ENCODE measurements at regions of chr1 and their contacts with region 1.

Region 1: GRCh38 chr1:33367485-33368405 is 46.8 kb upstream of the A3GALT2 start:
- DNase-seq: peak; percentile 87 to 95 (median 94)
- ATAC-seq: peak; percentile 72
- H3K4me3 ChIP-seq: no peak overlapping the region
- H3K27ac ChIP-seq: peak overlapping the region; percentile 10
- H3K4me1 ChIP-seq: peaks cover 25% of the 10 kb centered on the region
- H3K27me3 ChIP-seq: no peaks in the 10 kb centered on the region

Region 2: DNA sequence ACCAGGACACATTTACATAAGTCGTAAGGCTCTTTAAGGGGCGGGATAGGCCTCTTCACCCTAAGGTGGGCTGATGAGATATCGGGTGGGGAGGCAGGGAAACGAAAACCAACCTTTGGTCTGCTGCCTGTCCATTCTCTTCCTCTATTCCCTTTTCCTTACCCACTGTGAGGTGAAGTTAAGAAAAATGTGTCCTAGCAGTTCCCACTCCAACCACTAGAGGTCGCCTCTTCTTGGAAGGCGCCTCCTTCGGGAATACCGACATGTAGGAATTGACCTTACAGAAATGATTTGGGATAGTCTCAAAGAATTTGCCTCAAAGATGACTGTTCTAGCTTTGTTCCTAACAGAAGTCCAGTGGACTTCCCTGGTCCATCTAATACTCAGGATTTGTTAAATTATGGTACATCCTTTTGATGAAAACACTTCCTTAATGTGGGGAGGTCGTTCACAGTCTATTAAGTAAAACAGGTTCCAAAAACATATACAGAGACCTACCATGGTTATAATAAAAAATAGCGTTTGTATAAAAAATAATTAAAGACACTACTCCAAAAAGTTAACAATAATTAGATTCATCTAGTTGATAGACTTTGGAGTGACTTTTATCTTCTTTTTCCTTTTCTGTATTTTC is 272.7 kb before region 1 on chr1:
- intact Hi-C with region 1: loop called in 1 of 4 experiments (anchors 10 kb)
- DNase-seq: peak in 1 of 3 donors; percentile 37
- ATAC-seq: peak in 1 of 2 donors; percentile 43
- H3K4me3 ChIP-seq: no peak overlapping the region
- H3K27ac ChIP-seq: no peak overlapping the region
- H3K4me1 ChIP-seq: peaks cover 4% of the 10 kb centered on the region
- H3K27me3 ChIP-seq: no peaks in the 10 kb centered on the region

Region 3: GRCh38 chr1:33219881-33220661 is 147.7 kb before region 1 on chr1:
- intact Hi-C with region 1: loop called in 2 of 4 experiments (anchors 5 to 10 kb)
- DNase-seq: peak in 1 of 3 donors; percentile 30
- ATAC-seq: peak in 1 of 2 donors; percentile 27
- H3K4me3 ChIP-seq: no peak overlapping the region
- H3K27ac ChIP-seq: no peak overlapping the region
- H3K4me1 ChIP-seq: no peaks in the 10 kb centered on the region
- H3K27me3 ChIP-seq: no peaks in the 10 kb centered on the region

Region 4: GRCh38 chr1:33228935-33229487 is 138.7 kb before region 1 on chr1:
- intact Hi-C with region 1: loop called in 1 of 4 experiments (anchors 10 kb)
- DNase-seq: peak in 1 of 3 donors; percentile 34
- ATAC-seq: peak; percentile 87 to 91
- H3K4me3 ChIP-seq: no peak overlapping the region
- H3K27ac ChIP-seq: peak overlapping the region; percentile 36
- H3K4me1 ChIP-seq: peaks cover 3% of the 10 kb centered on the region
- H3K27me3 ChIP-seq: no peaks in the 10 kb centered on the region

Region 5: GRCh38 chr1:33295450-33296081 is 72.2 kb before region 1 on chr1:
- intact Hi-C with region 1: loop called (anchors 2 to 5 kb)
- DNase-seq: peak; percentile 82 to 93 (median 93)
- ATAC-seq: peak; percentile 78 to 81
- H3K4me3 ChIP-seq: no peak overlapping the region
- H3K27ac ChIP-seq: no peak overlapping the region
- H3K4me1 ChIP-seq: peaks cover 3% of the 10 kb centered on the region
- H3K27me3 ChIP-seq: no peaks in the 10 kb centered on the region

Region 6: DNA sequence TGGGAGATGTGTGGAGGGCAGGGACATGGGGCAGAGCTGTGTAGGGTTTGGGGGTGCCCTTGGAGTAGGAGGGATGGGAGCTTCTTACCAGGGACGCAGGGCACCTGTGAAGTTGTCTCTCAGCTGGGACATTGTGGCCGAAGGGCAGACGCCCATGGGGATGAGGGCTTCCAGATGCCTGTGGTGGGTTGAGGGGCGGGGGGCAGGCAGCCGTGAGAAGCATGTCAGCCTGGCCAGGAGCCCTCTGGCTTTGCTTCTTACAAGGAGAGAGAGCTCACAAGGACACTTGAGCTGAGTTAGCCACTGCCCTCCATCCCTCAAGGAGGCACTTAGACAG is 55.4 kb before region 1 on chr1:
- intact Hi-C with region 1: no loop called
- DNase-seq: no peak
- ATAC-seq: peak in 1 of 2 donors; percentile 14
- H3K4me3 ChIP-seq: no peak overlapping the region
- H3K27ac ChIP-seq: no peak overlapping the region
- H3K4me1 ChIP-seq: no peaks in the 10 kb centered on the region
- H3K27me3 ChIP-seq: no peaks in the 10 kb centered on the region

Region 7: GRCh38 chr1:33420870-33421775 is 53.4 kb after region 1 on chr1:
- intact Hi-C with region 1: no loop called
- DNase-seq: no peak
- ATAC-seq: no peak
- H3K4me3 ChIP-seq: no peak overlapping the region
- H3K27ac ChIP-seq: no peak overlapping the region
- H3K4me1 ChIP-seq: peaks cover 4% of the 10 kb centered on the region
- H3K27me3 ChIP-seq: no peaks in the 10 kb centered on the region

Region 8: GRCh38 chr1:33466159-33466558 is 98.4 kb after region 1 on chr1:
- intact Hi-C with region 1: loop called in 2 of 4 experiments (anchors 5 to 10 kb)
- DNase-seq: peak in 1 of 3 donors; percentile 71
- ATAC-seq: peak in 1 of 2 donors; percentile 18
- H3K4me3 ChIP-seq: no peak overlapping the region
- H3K27ac ChIP-seq: no peak overlapping the region
- H3K4me1 ChIP-seq: peaks cover 8% of the 10 kb centered on the region
- H3K27me3 ChIP-seq: no peaks in the 10 kb centered on the region

Region 9: GRCh38 chr1:33616773-33617172 is 249.0 kb after region 1 on chr1:
- intact Hi-C with region 1: loop called in 1 of 4 experiments (anchors 10 kb)
- DNase-seq: no peak
- ATAC-seq: peak in 1 of 2 donors; percentile 33
- H3K4me3 ChIP-seq: no peak overlapping the region
- H3K27ac ChIP-seq: no peak overlapping the region
- H3K4me1 ChIP-seq: no peaks in the 10 kb centered on the region
- H3K27me3 ChIP-seq: no peaks in the 10 kb centered on the region